CD4-positive, alpha-beta memory T cell (primary cell): ENCODE measurements at regions of chr1 and their contacts with region 1.

Region 1: DNA sequence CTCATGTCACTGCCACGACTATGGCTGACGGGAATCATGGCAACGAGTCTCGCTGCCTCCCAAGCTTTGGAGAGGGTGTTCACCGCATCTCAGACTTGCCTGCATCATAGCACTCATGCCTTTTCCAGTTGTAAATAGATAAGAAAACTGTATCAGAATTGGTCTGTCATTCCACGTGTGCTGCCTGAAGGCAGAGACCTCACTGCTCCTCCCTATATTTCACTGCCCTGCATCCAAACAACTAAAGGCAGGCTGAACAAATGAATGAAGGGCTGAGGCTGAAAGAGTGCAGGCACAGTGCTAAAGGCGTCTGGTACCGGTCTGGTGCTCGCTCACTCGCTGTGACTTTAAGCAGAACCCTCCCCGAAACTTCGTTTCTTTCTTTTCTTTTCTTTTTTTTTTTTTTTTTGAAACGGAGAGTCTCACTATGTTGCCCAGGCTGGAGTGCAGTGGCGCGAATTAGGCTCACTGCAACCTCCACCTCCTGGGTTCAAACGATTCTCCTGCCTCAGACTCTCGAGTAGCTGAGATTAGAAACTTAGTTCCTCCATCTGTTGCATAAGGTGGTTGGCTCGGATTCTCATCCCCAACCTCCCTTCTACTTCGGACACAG is 542 bp downstream of the EIF2B3 start:
- DNase-seq: no peak
- H3K4me3 ChIP-seq: peak overlapping the region; percentile 67 to 70
- H3K4me3 Mint-ChIP-seq: peak overlapping the region; percentile 98 to 100 (median 99)
- H3K27ac ChIP-seq: peak overlapping the region; percentile 59
- H3K27ac Mint-ChIP-seq: peak overlapping the region; percentile 34 to 99 (median 96)
- H3K4me1 ChIP-seq: peaks cover 11% of the 10 kb centered on the region
- H3K4me1 Mint-ChIP-seq: peaks cover 15 to 26% (median 21%) of the 10 kb centered on the region in 4 donors
- H3K27me3 ChIP-seq: no peaks in the 10 kb centered on the region
- H3K27me3 Mint-ChIP-seq: no peaks in the 10 kb centered on the region

Region 2: DNA sequence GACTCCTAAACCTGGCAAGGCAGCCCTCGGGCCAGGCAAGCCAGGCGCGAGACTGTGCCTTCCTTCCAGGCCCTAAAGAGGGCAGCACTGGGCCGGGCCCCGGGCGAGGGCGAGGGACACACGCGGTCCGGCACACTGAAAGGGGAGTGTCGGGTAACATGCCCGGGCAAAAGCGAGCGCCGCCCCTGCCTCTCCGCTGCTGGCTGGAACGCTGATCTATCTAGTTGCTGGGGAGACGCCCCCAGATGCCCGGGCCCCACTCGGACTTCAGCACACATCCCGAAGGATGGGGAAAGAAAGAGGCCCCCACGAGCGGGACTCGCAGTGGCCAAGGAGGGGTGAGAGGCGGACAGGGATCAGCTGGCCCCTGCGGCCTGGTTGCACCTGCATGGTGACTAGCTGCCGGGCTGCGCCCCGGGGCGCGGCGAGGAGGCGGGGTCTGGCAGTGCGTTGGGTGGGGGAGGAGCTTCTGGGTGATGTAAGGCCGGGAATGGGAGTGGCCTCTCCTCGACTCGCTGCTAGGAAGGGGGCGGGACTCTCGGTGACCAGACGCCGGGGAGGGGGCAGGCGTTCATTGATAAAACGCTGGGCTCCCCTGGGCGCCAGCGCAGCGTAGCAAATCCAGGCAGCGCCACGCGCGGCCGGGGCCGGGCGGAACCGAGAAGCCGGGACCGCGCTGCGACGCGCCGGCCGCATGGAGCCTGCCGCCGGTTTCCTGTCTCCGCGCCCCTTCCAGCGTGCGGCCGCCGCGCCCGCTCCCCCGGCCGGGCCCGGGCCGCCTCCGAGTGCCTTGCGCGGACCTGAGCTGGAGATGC is 185.9 kb before region 1 on chr1 and contains the start of gene PLK3:
- CTCF ChIA-PET with region 1: interaction called, 5 read pairs
- POLR2A ChIA-PET with region 1: interaction called, 13 read pairs
- intact Hi-C with region 1: no loop called
- DNase-seq: peak; percentile 99 to 100 (median 99)
- H3K4me3 ChIP-seq: peak within 1 kb of the TSS; percentile 77 to 83
- H3K4me3 Mint-ChIP-seq: peak within 1 kb of the TSS; percentile 89 to 99 (median 96)
- H3K27ac ChIP-seq: peak within 1 kb of the TSS; percentile 96
- H3K27ac Mint-ChIP-seq: peak within 1 kb of the TSS; percentile 82 to 100 (median 99)
- H3K4me1 ChIP-seq: peaks cover 37% of the 10 kb centered on the region
- H3K4me1 Mint-ChIP-seq: peaks cover 23 to 48% (median 31%) of the 10 kb centered on the region in 4 donors
- H3K27me3 ChIP-seq: no peaks in the 10 kb centered on the region
- H3K27me3 Mint-ChIP-seq: no peaks in the 10 kb centered on the region
- total RNA-seq, gene PLK3: 151 to 153 TPM

Region 3: GRCh38 chr1:44807262-44808062 is 178.4 kb before region 1 on chr1 and contains the start of gene DYNLT4:
- CTCF ChIA-PET with region 1: no interaction called
- POLR2A ChIA-PET with region 1: interaction called, 18 read pairs
- intact Hi-C with region 1: no loop called
- DNase-seq: peak; percentile 91 to 98 (median 91)
- H3K4me3 ChIP-seq: peak within 1 kb of the TSS; percentile 41 to 57
- H3K4me3 Mint-ChIP-seq: peak within 1 kb of the TSS; percentile 74 to 87 (median 80)
- H3K27ac ChIP-seq: peak within 1 kb of the TSS; percentile 98
- H3K27ac Mint-ChIP-seq: peak within 1 kb of the TSS; percentile 98 to 100 (median 99)
- H3K4me1 ChIP-seq: peaks cover 91% of the 10 kb centered on the region
- H3K4me1 Mint-ChIP-seq: peaks cover 57 to 94% (median 73%) of the 10 kb centered on the region in 4 donors
- H3K27me3 ChIP-seq: no peaks in the 10 kb centered on the region
- H3K27me3 Mint-ChIP-seq: no peaks in the 10 kb centered on the region
- total RNA-seq, gene DYNLT4: 0.47 TPM in 1 of 2 experiments, not detected in the other

Region 4: GRCh38 chr1:45499415-45499769 is 513.5 kb after region 1 on chr1:
- CTCF ChIA-PET with region 1: no interaction called
- POLR2A ChIA-PET with region 1: no interaction called
- intact Hi-C with region 1: loop called (anchors 1 kb)
- DNase-seq: peak in 1 of 5 donors; percentile 4
- H3K4me3 ChIP-seq: peak overlapping the region; percentile 62 to 88
- H3K4me3 Mint-ChIP-seq: peak overlapping the region; percentile 91 to 96 (median 95)
- H3K27ac ChIP-seq: peak overlapping the region; percentile 62
- H3K27ac Mint-ChIP-seq: peak overlapping the region; percentile 81 to 98 (median 96)
- H3K4me1 ChIP-seq: peaks cover 18% of the 10 kb centered on the region
- H3K4me1 Mint-ChIP-seq: peaks cover 31 to 34% (median 31%) of the 10 kb centered on the region in 4 donors
- H3K27me3 ChIP-seq: no peaks in the 10 kb centered on the region
- H3K27me3 Mint-ChIP-seq: no peaks in the 10 kb centered on the region